ENCODE measurements at regions of chr6 and their contacts with region 1.

Region 1: GRCh38 chr6:31795616-31796298 is at the start of gene VARS1:
- DNase-seq: no peak
- H3K4me3 ChIP-seq: peak within 1 kb of the TSS; percentile 95
- H3K27me3 ChIP-seq: no peaks in the 10 kb centered on the region
- CTCF ChIP-seq: peak; percentile 75
- polyA plus RNA-seq, gene VARS1: 10.9 and 33.9 TPM in 2 replicates

Region 2: GRCh38 chr6:31776989-31777666 is 18.6 kb before region 1 on chr6 and contains the start of gene VWA7:
- CTCF ChIA-PET with region 1: interaction called, 22 read pairs
- POLR2A ChIA-PET with region 1: no interaction called
- DNase-seq: no peak
- H3K4me3 ChIP-seq: no peak within 1 kb of the TSS
- H3K27me3 ChIP-seq: no peaks in the 10 kb centered on the region
- CTCF ChIP-seq: no peak
- polyA plus RNA-seq, gene VWA7: 0.16 and 0.29 TPM in 2 replicates

Region 3: DNA sequence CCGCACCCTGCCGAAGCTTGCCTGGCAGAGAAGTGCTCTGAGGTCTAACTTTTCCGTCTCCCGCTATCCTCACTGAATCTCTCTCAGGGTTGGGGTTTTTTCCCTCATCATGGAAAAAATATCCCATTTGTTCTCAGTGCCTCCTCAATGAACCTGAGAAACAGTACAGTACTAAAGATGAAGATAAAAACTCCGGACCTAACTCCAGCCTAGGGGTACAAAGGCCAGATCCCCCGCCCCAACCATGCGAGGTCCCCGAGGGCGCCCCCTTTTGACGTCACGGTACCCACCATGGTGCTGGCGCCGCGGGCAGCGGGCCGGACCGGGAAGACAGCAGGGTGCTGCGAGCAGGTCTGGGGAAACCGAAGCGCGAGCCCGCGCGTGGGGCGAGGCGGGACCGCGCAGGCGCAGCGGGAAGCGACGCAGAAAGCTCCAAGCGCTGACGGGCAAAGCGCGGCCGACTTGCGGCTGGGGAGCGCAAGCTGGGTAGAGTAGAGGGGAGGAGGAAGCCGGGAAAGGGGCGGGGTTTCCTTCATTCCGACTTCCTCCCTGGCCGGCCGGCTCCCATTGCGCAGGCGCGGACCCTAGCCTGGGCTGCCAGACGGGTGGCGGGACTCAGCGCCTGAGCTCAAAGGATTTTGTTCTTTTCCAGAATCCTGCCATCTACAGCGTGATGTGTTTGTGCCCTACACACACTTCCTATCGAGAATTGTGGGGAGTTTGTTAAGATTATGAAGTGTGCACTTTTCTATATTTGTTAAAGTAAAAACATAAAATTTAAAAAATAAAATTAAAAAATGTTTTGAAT is 10.9 kb after region 1 on chr6 and contains the start of gene LSM2:
- CTCF ChIA-PET with region 1: interaction called, 12 read pairs
- POLR2A ChIA-PET with region 1: interaction called, 3 read pairs
- DNase-seq: peak; percentile 91
- H3K4me3 ChIP-seq: peak within 1 kb of the TSS; percentile 72
- H3K27me3 ChIP-seq: no peaks in the 10 kb centered on the region
- CTCF ChIP-seq: peak; percentile 32
- polyA plus RNA-seq, gene LSM2: 40.3 and 43.5 TPM in 2 replicates

Region 4: DNA sequence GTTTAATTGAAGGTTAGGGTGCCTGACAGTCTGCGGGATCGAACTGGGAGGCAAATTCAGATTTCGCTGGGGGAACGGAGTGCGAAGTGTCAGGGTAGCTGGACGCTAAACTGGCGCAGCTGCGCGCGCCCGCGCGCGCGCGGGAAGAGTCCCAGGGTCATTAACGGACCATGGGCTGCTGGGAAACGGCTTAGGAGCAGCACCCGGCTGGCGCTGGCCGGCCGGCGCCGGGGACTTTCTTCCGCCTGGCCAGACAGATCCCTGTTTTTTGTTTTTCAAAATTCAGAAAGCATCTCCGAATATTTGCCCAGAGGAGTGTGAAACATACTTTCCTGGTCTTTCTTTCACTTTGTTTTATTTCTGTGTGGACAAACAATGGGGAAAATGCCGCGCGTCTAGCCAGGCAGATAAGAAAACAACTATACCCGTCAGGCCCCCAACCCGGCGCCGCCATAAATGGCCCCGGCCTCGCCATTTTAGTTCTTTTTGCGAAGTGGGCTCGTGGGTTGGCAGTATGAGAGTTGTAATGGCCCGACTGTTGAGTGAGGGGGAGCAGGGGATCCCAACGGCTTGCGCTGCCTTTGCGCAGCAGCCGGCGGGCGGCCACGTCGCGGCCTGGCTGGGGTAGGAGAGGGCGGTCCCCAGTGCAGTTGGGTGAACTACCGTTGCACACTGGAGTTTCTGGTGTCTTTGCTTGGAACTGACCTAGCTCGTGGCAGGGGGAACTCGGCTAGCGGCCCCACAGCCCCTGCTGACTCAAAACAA is 38.9 kb after region 1 on chr6:
- CTCF ChIA-PET with region 1: interaction called, 4 read pairs
- POLR2A ChIA-PET with region 1: interaction called, 29 read pairs
- DNase-seq: no peak
- H3K4me3 ChIP-seq: peak overlapping the region; percentile 98
- H3K27me3 ChIP-seq: no peaks in the 10 kb centered on the region
- CTCF ChIP-seq: no peak

Region 5: GRCh38 chr6:31901953-31902643 is 106.3 kb after region 1 on chr6 and contains the start of gene ZBTB12:
- CTCF ChIA-PET with region 1: no interaction called
- POLR2A ChIA-PET with region 1: no interaction called
- DNase-seq: peak; percentile 74
- H3K4me3 ChIP-seq: peak within 1 kb of the TSS; percentile 61
- H3K27me3 ChIP-seq: no peaks in the 10 kb centered on the region
- CTCF ChIP-seq: no peak
- polyA plus RNA-seq, gene ZBTB12: 2.0 and 2.6 TPM in 2 replicates

Measured in BJ (cell line).